Calu3 (cell line): ENCODE measurements at regions of chr2 and their contacts with region 1.

Region 1: GRCh38 chr2:138827426-138828054 is 47.4 kb upstream of the NXPH2 start:
- DNase-seq: peak; percentile 27
- H3K4me3 Mint-ChIP-seq: no peak overlapping the region
- H3K27ac Mint-ChIP-seq: no peak overlapping the region
- H3K4me1 Mint-ChIP-seq: no peaks in the 10 kb centered on the region
- H3K27me3 Mint-ChIP-seq: no peaks in the 10 kb centered on the region
- CTCF ChIP-seq: peak; percentile 72

Region 2: GRCh38 chr2:137865954-137866540 is 961.5 kb before region 1 on chr2:
- CTCF ChIA-PET with region 1: interaction called, 12 read pairs
- intact Hi-C with region 1: loop called (anchors 2 kb)
- DNase-seq: peak; percentile 70
- H3K4me3 Mint-ChIP-seq: no peak overlapping the region
- H3K27ac Mint-ChIP-seq: no peak overlapping the region
- H3K4me1 Mint-ChIP-seq: no peaks in the 10 kb centered on the region
- H3K27me3 Mint-ChIP-seq: no peaks in the 10 kb centered on the region
- CTCF ChIP-seq: peak; percentile 67

Region 3: GRCh38 chr2:137888845-137889244 is 938.7 kb before region 1 on chr2:
- CTCF ChIA-PET with region 1: interaction called, 19 read pairs
- intact Hi-C with region 1: loop called (anchors 1 kb)
- DNase-seq: peak; percentile 77
- H3K4me3 Mint-ChIP-seq: no peak overlapping the region
- H3K27ac Mint-ChIP-seq: no peak overlapping the region
- H3K4me1 Mint-ChIP-seq: peaks cover 8% of the 10 kb centered on the region
- H3K27me3 Mint-ChIP-seq: no peaks in the 10 kb centered on the region
- CTCF ChIP-seq: peak; percentile 52

Region 4: GRCh38 chr2:137910641-137911040 is 916.9 kb before region 1 on chr2:
- CTCF ChIA-PET with region 1: interaction called, 20 read pairs
- intact Hi-C with region 1: loop called (anchors 1 kb)
- DNase-seq: no peak
- H3K4me3 Mint-ChIP-seq: no peak overlapping the region
- H3K27ac Mint-ChIP-seq: no peak overlapping the region
- H3K4me1 Mint-ChIP-seq: peaks cover 17% of the 10 kb centered on the region
- H3K27me3 Mint-ChIP-seq: no peaks in the 10 kb centered on the region
- CTCF ChIP-seq: peak; percentile 53

Region 5: GRCh38 chr2:138090330-138090729 is 737.2 kb before region 1 on chr2:
- CTCF ChIA-PET with region 1: no interaction called
- intact Hi-C with region 1: loop called (anchors 10 kb)
- DNase-seq: peak; percentile 50
- H3K4me3 Mint-ChIP-seq: no peak overlapping the region
- H3K27ac Mint-ChIP-seq: no peak overlapping the region
- H3K4me1 Mint-ChIP-seq: peaks cover 6% of the 10 kb centered on the region
- H3K27me3 Mint-ChIP-seq: no peaks in the 10 kb centered on the region
- CTCF ChIP-seq: peak; percentile 36

Region 6: DNA sequence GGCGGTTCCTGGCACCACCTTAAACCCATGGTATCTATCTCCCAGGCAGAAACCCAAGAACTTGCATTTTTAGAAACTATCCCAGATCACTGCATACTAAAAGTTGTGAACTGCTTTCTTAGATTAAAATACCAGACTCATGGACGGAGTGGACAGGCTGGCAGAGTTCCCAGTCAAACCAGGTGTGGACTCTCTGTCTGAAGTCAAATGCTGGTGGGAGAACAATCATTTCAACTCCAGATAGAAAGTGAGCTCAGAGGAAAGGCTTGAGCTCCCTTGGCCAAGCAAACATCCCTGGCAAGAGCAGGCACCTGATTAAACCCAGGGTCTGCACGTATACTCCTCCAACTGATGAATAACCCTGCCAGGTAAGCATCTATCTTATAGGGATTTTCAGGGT is 66.9 kb before region 1 on chr2:
- CTCF ChIA-PET with region 1: no interaction called
- intact Hi-C with region 1: no loop called
- DNase-seq: no peak
- H3K4me3 Mint-ChIP-seq: no peak overlapping the region
- H3K27ac Mint-ChIP-seq: no peak overlapping the region
- H3K4me1 Mint-ChIP-seq: no peaks in the 10 kb centered on the region
- H3K27me3 Mint-ChIP-seq: no peaks in the 10 kb centered on the region
- CTCF ChIP-seq: no peak

Region 7: GRCh38 chr2:138814120-138814898 is 13.2 kb before region 1 on chr2:
- CTCF ChIA-PET with region 1: interaction called, 16 read pairs
- intact Hi-C with region 1: no loop called
- DNase-seq: peak; percentile 26
- H3K4me3 Mint-ChIP-seq: no peak overlapping the region
- H3K27ac Mint-ChIP-seq: no peak overlapping the region
- H3K4me1 Mint-ChIP-seq: no peaks in the 10 kb centered on the region
- H3K27me3 Mint-ChIP-seq: no peaks in the 10 kb centered on the region
- CTCF ChIP-seq: peak; percentile 13

Region 8: DNA sequence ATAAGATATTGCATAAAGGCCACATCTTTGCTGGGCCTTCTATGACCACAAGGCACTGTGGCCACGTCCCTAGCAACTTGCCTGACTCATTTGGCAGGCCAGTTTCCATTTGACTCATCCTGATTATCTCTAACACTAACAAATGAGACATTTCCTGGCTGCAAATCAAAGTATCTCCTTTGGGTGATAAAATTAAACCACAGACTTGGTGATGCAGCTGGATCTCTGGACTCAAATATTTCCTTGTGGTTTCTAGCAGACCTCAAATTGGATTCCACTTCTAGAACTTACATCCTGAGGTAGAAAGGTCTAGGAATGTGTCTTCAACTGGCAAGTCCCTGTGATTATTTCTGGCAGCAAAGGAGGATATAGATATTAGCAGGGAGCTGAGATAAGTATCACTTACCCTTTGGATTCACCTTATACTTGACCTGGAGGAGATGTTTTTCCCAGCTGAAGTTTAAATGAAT is 120.6 kb after region 1 on chr2:
- CTCF ChIA-PET with region 1: interaction called, 13 read pairs
- intact Hi-C with region 1: no loop called
- DNase-seq: peak; percentile 34
- H3K4me3 Mint-ChIP-seq: no peak overlapping the region
- H3K27ac Mint-ChIP-seq: peak overlapping the region; percentile 58
- H3K4me1 Mint-ChIP-seq: peaks cover 16% of the 10 kb centered on the region
- H3K27me3 Mint-ChIP-seq: no peaks in the 10 kb centered on the region
- CTCF ChIP-seq: no peak